ENCODE measurements at regions of chr17 and their contacts with region 1.

Region 1: DNA sequence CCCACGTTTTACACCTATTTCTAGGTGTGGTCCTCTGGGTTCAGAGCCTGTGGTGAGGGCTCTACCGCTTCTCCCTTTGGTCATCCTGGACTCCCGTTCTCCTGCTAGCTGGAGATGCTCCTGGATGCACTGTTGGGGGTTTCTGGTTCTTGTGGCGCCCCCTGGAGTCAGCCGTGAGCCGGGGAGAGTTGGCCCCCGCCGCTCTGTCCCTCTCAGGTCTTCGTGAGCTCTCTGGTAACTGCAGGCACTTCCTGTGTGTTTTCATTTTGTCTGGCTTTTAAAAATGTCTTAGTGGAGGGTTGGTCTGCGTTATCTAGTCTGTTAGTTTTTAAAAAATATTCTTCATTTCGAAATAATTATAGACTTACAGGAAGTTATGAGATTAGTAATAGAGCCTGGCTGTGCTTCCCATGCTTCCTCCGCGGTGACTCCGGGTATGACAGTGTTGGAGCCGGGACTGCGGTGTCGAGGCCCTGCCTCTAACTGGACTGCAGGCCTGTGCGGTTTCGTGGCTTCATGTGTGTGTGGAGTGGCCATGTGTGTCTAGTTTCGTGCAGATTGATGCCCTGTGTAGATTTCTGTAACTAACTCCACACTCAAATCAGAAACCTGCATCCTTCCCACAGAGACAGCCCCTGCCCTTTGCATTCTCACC is 78.0 kb upstream of the ZNF750 start:
- DNase-seq: no peak

Region 2: DNA sequence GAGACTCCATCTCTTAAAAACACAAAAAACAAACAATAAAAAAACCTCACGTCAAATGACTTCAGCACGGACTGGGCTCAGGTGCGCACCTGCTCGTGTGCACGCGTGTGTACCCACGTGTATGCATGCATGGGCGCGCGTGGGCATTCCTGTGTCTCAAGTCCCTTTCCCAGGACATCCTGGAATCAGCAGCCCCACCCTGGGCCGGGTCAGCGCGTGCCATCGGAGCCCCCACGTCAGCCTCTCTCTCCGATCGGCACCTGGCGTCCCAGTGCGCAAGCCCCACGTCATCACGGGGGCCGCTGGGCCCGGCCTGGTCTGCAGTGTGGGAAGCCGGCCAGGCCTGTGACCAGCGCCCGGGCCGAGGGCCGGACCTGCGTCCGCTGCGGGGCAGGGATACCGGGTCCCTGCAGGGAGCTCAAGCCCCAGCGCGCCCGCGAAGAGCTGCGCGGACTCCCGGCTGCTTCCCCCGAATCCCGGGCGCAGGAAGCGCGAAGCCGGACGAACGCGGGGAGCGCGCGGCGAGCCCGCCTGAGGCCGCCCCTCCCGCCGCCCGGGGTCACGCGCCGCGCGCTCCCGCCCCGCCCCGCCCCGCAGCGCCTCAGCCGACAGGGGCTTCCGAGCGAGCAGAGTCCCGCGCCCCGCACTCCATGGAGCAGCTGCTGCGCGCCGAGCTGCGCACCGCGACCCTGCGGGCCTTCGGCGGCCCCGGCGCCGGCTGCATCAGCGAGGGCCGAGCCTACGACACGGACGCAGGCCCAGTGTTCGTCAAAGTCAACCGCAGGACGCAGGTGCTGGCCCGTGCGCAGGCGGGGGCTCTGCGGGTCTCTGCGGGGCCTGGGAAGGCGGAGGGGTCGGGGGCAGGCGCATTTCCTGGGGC is 182.6 kb before region 1 on chr17 and contains the start of gene FN3K:
- intact Hi-C with region 1: no loop called
- DNase-seq: no peak
- total RNA-seq, gene FN3K: 82.4 TPM

Region 3: DNA sequence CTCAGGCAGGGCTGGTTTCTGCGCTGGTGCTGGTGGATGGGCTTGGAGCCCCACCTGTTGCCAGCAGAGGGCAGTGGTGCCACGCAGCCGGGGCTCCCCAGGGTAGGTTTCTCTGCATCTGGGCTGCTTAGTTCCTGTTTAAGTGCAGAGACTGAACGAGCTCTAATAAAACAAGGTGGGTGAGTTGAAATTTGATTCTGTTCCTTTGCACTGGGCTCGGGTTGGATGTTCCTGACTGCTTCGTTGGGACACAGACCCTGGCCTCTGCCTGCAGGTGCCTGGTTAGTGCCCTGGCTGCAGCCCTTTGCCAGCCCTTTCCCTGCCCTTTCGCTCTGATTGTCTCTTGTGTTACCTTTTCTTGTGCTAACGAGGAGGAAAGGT is 135.9 kb before region 1 on chr17:
- intact Hi-C with region 1: loop called (anchors 1 kb)
- DNase-seq: peak; percentile 92

Region 4: GRCh38 chr17:82848022-82848592 is 69.7 kb before region 1 on chr17:
- intact Hi-C with region 1: loop called (anchors 10 kb)
- DNase-seq: no peak

Region 5: DNA sequence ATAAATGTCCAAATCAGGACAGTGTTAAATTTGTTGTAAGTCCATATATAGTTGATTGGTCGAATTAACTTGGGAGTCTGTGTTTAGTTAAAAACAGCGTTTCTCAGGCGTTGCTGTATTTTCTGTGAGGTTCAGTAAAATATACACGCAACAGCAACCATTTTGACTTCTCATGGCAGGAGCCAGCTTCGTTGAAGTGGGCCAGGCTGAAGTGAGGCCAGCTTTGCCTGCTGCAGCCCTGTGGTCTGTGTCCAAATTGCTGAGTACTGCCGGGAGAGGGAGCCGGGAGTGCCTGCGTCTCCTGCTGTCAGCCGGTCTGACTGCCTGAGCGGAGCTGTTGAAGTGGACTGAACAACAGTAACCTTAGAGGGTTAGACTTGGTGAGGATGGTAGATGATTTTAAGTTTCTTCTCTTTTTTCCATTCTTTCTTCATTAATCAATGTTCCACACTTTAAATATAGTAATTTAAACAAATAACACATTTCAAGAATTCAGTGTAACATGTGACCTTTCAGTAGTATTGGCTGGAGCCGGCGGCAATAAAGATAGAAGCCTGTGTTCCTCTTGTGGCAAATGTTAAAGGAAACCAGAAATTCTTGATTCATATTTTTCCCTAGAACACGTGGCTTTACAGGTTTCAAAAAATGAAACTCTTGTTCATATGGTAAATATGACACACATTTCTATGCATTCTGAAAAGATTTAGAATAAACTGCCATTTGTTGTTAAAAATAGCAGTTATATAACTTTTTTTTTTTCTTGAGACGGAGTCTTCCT is 41.0 kb before region 1 on chr17:
- intact Hi-C with region 1: loop called (anchors 5 kb)
- DNase-seq: peak; percentile 88